ENCODE measurements at regions of chr16 and their contacts with region 1.

Region 1: GRCh38 chr16:1941924-1942809 is 832 bp downstream of the MSRB1 start:
- DNase-seq: peak; percentile 30
- H3K27ac ChIP-seq: peak overlapping the region; percentile 73
- CTCF ChIP-seq: no peak

Region 2: GRCh38 chr16:1707193-1707790 is 234.9 kb before region 1 on chr16:
- CTCF ChIA-PET with region 1: no interaction called
- POLR2A ChIA-PET with region 1: no interaction called
- DNase-seq: no peak
- H3K27ac ChIP-seq: peak overlapping the region; percentile 93
- CTCF ChIP-seq: no peak

Region 3: GRCh38 chr16:1929578-1930337 is 12.4 kb before region 1 on chr16:
- CTCF ChIA-PET with region 1: interaction called, 12 read pairs
- POLR2A ChIA-PET with region 1: interaction called, 3 read pairs
- DNase-seq: peak; percentile 84
- H3K27ac ChIP-seq: peak overlapping the region; percentile 71
- CTCF ChIP-seq: peak; percentile 98